Dendritic cell treated with granulocyte-macrophage colony-stimulating factor and Interleukin-4, amounts not matched to agents 40 ng/mL and 50 ng/mL, for 4 days (primary cell): ENCODE measurements at regions of chr21 and their contacts with region 1.

Region 1: DNA sequence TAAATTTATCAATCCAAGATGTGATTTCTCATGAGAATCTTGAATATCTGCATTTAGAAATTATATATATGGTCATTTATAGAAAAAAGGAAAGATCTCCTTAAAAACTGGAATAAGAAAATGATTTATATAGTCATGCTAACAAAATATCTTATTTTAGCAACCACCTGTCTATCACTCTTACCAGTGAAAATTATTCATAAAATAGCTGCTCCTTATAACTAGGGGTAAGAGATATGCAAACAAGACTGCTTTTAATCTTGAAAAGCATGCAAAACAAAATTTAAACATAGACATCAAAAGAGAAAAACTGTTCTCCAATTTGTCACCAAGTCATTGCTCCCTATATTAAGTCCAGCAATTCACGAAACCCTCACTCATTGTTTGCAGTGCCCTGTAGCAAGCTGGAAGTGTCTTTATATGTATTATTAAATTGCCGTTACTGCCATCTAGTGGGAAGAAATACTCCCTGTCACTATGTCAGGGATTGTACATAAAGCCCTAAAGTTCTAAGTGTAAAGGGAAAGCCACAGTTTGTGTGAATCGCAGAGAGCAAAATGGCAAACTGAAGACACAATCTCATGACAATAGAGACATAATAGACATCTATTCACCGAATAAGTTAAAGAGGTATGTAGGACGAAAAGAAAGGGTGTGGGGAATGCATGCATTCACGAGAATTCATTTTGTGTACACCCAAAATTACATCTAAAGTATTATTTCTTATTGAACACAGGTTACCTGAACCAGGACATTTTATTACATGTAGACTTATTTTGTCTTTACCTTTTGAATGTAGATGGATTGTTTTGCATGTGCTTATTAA is 600.5 kb downstream of the USP25 start:
- H3K4me3 Mint-ChIP-seq: no peak overlapping the region
- H3K27ac Mint-ChIP-seq: no peak overlapping the region
- H3K4me1 Mint-ChIP-seq: no peaks in the 10 kb centered on the region
- H3K27me3 Mint-ChIP-seq: no peaks in the 10 kb centered on the region

Region 2: DNA sequence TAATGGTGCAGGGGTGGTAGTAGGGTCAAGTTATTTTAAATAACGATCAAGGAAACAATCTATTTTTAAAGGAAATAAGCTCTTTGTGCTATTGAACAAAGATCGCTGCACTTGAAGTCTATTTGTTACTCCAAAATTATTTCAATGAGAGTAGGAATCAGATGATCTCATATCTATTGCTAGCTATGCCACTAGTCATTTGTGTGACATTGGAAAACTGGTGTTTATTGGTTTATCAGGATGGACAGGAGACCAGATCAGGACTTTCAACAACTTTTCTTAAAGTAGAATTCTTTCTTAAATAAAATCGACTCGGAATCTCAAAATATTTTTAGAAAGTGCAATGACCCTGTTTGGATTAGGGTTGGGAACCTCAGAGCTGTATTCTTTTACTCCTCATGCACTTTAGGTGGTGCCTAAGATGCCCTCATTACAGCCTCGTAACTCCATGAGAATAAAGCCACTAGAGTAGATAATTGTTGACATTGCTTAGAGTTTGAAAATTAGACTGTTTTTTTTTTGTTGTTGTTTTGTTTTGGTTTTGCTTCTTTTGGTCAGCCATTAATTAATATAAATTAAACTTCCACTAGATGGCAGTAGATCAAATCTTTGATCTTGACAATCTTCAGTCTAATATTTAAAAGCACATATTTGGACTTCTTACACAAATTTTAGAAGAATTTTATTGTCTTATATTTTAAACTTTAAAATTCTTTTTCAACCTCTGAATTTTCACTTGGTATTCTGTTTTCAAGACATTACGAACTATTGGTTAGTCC is 248.1 kb before region 1 on chr21:
- intact Hi-C with region 1: loop called (anchors 1 kb)
- H3K4me3 Mint-ChIP-seq: no peak overlapping the region
- H3K27ac Mint-ChIP-seq: no peak overlapping the region
- H3K4me1 Mint-ChIP-seq: no peaks in the 10 kb centered on the region
- H3K27me3 Mint-ChIP-seq: no peaks in the 10 kb centered on the region